Activated T-helper 2 cell treated with anti-CD3 and anti-CD28 coated beads, Interferon-gamma antibody, Interleukin-2, Interleukin-4, amounts not matched to agents 10 μg/mL and 5 μg/mL and 100 μg/mL, durations not matched to agents 14 hours and 24 hours and 36 hours (primary cell): ENCODE measurements at regions of chr1 and their contacts with region 1.

Region 1: DNA sequence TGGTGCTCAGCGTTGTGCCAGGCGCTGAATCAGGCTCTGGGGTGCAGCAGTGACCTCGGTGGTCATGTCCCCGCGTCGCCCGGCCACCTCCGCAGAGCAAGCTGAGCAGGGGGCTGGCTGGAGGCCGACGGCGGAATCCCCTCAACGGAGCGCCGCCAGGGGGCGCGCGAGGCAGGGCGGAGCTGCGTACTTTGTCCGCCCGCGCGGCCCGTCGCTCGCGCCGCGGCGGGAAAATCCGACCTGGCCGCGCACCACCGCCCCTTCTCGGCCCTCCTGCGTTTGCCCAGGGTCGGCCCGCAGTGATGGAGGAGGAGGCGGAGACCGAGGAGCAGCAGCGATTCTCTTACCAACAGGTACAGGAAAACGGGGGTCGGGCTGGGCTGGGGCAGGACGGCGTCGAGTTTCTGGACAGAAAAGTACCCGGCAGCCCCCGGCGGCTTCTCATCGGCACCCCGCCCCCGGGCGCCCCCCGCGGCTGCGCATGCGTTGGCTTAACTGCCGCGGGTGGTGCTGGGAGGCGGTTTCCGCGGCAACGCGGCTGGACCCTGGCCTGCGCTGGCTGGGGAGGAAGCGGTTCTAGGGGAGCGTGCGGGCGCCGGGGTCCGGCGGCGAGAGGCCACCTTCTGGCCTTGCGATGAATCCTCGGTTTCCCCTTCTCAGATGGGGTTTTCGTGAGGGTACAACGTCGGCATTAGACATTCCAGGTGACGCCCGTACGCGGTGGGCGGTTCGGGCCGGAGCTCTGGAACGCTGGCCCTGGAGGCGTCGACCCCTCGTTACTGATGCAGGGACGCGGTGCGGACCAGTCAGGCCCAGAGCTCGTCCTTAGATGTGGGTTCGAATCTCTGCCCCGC is at the start of gene CENPS:
- DNase-seq: peak; percentile 82
- H3K4me3 Mint-ChIP-seq: peak within 1 kb of the TSS; percentile 94
- H3K27ac Mint-ChIP-seq: peak within 1 kb of the TSS; percentile 95
- H3K4me1 Mint-ChIP-seq: peaks cover 24% of the 10 kb centered on the region
- H3K27me3 Mint-ChIP-seq: no peaks in the 10 kb centered on the region
- total RNA-seq, gene CENPS: 16.8 and 17.8 TPM in 2 replicates

Region 2: GRCh38 chr1:9874959-9875635 is 555.3 kb before region 1 on chr1:
- intact Hi-C with region 1: loop called (anchors 2 kb)
- DNase-seq: peak; percentile 64
- H3K4me3 Mint-ChIP-seq: no peak overlapping the region
- H3K27ac Mint-ChIP-seq: no peak overlapping the region
- H3K4me1 Mint-ChIP-seq: peaks cover 5% of the 10 kb centered on the region
- H3K27me3 Mint-ChIP-seq: no peaks in the 10 kb centered on the region

Region 3: GRCh38 chr1:9942939-9943788 is 487.3 kb before region 1 on chr1 and contains the starts of genes LZIC and NMNAT1:
- intact Hi-C with region 1: loop called (anchors 2 kb)
- DNase-seq: peak; percentile 88
- H3K4me3 Mint-ChIP-seq: peak within 1 kb of the TSS; percentile 99
- H3K27ac Mint-ChIP-seq: peak within 1 kb of the TSS; percentile 98
- H3K4me1 Mint-ChIP-seq: peaks cover 13% of the 10 kb centered on the region
- H3K27me3 Mint-ChIP-seq: no peaks in the 10 kb centered on the region
- total RNA-seq, gene LZIC: 30.0 and 31.1 TPM in 2 replicates
- total RNA-seq, gene NMNAT1: 6.8 TPM in 2 replicates

Region 4: DNA sequence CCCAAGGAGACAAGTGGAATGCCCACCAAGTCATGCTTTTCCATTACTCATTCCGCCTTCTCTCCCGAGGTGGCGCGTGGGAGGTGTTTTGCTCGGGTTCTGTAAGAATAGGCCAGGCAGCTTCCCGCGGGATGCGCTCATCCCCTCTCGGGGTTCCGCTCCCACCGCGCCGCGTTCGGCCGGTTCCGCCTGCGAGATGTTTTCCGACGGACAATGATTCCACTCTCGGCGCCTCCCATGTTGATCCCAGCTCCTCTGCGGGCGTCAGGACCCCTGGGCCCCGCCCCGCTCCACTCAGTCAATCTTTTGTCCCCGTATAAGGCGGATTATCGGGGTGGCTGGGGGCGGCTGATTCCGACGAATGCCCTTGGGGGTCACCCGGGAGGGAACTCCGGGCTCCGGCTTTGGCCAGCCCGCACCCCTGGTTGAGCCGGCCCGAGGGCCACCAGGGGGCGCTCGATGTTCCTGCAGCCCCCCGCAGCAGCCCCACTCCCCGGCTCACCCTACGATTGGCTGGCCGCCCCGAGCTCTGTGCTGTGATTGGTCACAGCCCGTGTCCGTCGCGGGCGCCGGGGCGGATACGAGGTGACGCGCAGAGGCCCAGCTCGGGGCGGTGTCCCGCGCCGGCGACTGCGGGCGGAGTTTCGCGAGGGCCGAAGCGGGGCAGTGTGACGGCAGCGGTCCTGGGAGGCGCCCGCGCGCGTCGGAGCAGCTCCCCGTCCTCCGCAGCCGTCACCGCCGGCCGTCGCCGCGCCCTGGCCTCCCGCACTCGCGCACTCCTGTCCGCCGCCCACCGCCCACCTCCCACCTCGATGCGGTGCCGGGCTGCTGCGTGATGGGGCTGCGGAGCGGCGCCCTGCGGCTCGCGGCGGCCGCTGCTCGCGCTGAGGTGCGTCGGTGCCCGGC is 220.3 kb before region 1 on chr1 and contains the start of gene KIF1B:
- intact Hi-C with region 1: loop called (anchors 1 kb)
- DNase-seq: peak; percentile 95
- H3K4me3 Mint-ChIP-seq: peak within 1 kb of the TSS; percentile 89
- H3K27ac Mint-ChIP-seq: peak within 1 kb of the TSS; percentile 84
- H3K4me1 Mint-ChIP-seq: peaks cover 33% of the 10 kb centered on the region
- H3K27me3 Mint-ChIP-seq: peaks cover 4% of the 10 kb centered on the region
- total RNA-seq, gene KIF1B: 21.9 and 23.8 TPM in 2 replicates

Region 5: DNA sequence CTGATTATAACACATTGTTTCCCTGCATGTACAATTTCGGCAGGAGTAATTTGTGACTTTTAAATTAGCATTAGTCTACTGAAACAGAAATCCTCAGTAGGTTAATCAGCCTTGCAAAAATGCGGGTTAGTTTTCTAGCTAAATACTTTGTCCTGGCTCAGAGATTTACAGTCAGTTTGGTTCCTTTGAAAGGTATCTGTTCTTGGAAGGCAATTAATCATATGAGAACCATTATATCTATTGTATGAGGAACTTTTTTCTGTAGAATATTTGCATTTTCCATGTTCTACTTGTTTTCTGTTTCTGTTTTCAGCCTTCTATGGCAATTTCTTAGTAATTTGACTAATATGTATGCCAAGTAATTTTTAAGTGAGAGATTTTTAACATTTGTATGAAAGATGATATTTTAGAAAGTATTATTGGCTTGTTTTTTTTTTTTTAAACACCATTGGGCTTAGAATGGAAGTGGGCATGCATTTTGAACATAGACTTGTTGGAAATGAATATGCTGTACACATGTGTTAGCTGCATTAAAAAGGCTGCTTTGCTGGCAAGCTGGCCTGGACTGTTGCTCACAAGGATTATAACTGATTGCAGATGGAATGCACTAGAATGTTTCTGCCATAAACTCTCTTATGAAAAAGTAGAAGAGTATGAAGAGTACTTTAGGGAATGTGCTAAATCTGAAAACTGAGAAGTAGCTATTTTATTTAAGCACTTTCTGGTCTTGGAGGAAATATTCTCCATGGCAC is 193.9 kb before region 1 on chr1:
- intact Hi-C with region 1: no loop called
- DNase-seq: no peak
- H3K4me3 Mint-ChIP-seq: no peak overlapping the region
- H3K27ac Mint-ChIP-seq: peak overlapping the region; percentile 44
- H3K4me1 Mint-ChIP-seq: peaks cover 11% of the 10 kb centered on the region
- H3K27me3 Mint-ChIP-seq: no peaks in the 10 kb centered on the region

Region 6: DNA sequence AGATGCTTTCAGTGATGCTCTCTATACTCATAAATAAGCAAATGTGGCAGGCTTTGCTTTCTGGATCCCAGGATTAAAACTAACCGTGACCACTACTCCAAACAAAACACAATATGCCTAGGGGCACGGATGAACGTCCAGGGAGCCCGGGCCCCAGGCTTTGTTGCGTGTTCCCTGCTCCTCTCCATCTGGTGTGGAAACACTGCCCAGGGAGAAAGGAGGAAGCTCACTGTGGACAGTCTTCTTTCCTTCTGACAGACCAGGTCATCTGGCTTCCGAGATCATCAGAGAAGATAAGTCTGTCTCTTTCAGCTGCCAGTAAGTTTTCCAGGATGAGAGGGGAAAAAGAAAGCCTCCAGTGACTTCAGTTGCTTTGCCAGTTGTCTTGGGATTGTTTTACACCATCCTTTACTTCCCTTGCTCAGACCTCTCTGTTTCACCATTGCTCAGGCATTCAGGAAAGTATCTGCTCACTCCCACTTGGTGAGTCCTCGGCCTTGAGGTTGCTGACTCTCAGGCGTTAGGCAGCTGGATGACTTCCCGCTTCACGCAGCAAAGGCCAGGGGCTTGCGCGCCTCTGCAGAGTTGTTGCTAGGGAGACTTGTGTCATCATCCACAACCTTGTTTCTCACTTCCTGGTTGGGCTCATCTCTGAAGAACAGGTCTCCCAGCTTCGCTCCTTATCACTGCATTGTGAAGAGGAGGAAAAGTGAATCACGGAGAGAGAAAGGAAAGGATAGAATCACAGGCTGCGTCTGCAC is 52.2 kb before region 1 on chr1:
- intact Hi-C with region 1: loop called (anchors 1 kb)
- DNase-seq: no peak
- H3K4me3 Mint-ChIP-seq: no peak overlapping the region
- H3K27ac Mint-ChIP-seq: no peak overlapping the region
- H3K4me1 Mint-ChIP-seq: no peaks in the 10 kb centered on the region
- H3K27me3 Mint-ChIP-seq: no peaks in the 10 kb centered on the region

Region 7: DNA sequence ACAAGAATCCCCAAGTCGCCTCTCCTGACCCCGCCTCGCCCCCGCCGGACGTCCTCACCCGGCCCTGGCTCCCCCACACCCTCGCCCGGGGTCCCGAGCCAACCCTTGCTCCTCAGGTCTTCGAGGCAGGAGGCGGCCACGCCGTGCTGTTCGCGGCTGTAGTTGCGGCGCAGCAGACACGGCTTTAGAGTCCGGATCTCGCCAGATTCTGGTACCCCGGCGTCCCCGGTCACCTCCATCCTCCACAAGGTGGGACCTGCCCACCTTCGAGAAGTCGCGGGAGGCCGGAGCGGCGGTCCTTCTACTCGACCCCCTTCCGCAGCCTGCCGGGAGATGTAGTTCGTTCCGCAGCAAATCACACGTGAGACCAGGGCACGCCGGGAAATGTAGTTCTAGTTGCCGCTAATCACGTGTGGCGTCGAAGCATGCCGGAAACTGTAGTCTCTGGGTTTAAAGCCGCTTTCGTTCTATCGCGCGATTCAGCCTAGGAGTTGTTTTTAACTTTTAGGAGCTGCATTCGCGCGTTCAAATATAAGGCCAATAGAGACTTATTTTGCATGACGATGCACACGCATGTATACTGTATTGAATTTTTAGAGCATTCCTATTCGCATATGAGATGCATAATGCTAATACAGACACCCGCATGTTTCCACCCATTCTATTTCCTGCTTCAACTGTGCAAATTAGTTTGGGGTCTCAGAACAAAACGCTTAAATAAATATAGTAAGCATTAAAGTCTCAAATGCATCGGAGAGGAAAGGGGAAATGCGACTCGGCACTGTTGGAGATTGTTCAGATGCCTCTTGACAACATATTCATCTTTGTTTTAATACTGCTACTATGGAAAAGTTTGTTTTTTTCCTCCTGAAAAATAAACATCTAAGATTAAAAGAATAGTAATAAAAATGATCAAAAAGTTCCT is 42.0 kb after region 1 on chr1 and contains the start of gene DFFA:
- intact Hi-C with region 1: loop called (anchors 1 kb)
- DNase-seq: peak; percentile 90
- H3K4me3 Mint-ChIP-seq: peak within 1 kb of the TSS; percentile 95
- H3K27ac Mint-ChIP-seq: peak within 1 kb of the TSS; percentile 93
- H3K4me1 Mint-ChIP-seq: peaks cover 33% of the 10 kb centered on the region
- H3K27me3 Mint-ChIP-seq: no peaks in the 10 kb centered on the region
- total RNA-seq, gene DFFA: 52.9 and 53.8 TPM in 2 replicates

Region 8: GRCh38 chr1:10494754-10495474 is 64.5 kb after region 1 on chr1:
- intact Hi-C with region 1: loop called (anchors 1 kb)
- DNase-seq: peak; percentile 73
- H3K4me3 Mint-ChIP-seq: peak overlapping the region; percentile 77
- H3K27ac Mint-ChIP-seq: peak overlapping the region; percentile 91
- H3K4me1 Mint-ChIP-seq: peaks cover 50% of the 10 kb centered on the region
- H3K27me3 Mint-ChIP-seq: no peaks in the 10 kb centered on the region